Motor neuron (in vitro differentiated cells): ENCODE measurements at regions of chr16 and their contacts with region 1.

Region 1: DNA sequence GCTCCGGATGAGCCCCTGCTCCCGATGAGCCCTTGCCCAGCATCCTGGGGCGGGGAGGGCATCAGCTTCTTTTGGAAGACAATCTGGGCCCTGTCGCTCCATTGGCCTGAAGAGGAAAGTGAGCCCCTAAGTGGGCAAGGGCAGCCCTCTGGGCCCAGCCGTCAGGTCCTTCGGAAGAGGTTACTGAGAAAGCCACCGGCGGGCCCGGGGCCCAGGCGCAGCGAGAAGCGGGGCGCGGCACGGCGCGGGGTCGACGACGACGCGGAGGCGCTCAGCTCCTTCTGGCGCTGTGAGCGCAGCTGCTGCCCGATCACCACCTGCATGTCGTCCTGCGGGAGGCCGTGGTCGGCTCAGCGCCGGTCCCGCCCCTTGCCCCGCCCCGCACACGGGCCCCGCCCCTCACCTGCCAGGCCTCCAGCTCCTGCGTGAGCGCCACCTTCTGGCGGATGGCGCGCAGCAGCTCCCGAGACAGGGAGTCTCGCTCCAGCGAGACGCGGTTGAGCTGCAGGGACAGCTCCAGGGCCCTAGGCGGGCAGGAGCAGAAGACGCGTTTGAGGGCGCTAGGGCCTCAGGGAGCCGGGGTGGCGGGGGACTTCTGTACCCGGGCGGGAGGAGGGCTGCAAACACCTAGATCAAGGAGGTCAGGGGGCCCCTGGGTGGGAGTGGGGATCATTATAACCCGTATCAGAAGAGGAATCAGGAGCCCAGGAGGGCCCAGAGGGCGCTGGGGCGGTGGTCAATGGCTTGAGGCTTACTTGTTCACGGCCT is 4.3 kb downstream of the THOC6 start:
- ATAC-seq: peak; percentile 4 to 56 (median 48)
- H3K4me3 ChIP-seq: peak overlapping the region; percentile 12 to 29 (median 26)
- H3K27ac ChIP-seq: peak overlapping the region in 1 of 2 donors; percentile 58
- H3K4me1 ChIP-seq: peaks cover 4 to 9% of the 10 kb centered on the region in 2 donors

Region 2: DNA sequence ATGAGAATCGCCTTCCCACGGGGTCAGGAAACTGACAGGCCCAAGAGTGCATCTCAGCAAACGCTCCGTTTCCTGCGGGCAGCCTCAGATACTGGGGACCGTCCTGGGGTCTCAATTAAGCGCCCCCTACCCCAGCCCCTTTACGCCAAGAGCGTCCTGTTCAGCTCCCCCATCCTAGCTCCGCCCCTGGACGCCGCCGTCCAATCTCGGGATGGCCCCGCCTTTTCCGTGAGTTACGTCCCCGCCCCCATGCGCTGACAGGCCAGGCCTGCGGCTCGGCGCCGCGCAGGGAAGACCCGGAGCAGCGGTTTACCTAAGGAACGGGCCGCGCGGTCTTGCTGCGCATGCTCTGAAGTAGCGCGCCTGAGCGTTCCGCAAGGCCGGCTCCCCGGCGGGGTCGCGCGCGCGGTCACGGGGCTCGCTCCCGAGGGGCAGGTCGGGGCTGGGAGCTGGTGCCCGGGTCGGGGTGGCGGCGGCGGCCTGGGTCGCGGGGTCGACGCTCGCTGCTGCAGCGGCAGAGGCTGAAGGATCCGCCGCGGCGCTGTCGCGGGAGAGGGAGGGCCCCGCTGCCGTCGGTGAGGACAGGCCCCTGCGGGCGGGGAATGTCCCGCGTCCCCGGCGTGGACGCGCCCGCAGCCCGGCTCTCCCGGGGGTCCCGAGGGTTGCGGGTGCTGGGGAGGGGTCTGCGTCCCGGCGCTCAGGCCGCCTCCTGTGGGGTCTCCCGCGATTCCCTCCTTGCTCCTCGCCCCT is 116.4 kb before region 1 on chr16 and contains the start of gene FLYWCH1:
- in situ Hi-C with region 1: no loop called
- ATAC-seq: peak; percentile 65 to 94 (median 90)
- H3K4me3 ChIP-seq: peak within 1 kb of the TSS; percentile 47 to 98 (median 73)
- H3K27ac ChIP-seq: peak within 1 kb of the TSS; percentile 50 to 51
- H3K4me1 ChIP-seq: peaks cover 5 to 7% of the 10 kb centered on the region in 2 donors
- total RNA-seq, gene FLYWCH1: 15.0 to 55.9 (median 23.0) TPM

Region 3: GRCh38 chr16:3134564-3135417 is 106.7 kb after region 1 on chr16 and contains the start of gene ZNF213:
- in situ Hi-C with region 1: loop called in 1 of 9 experiments (anchors 25 kb)
- ATAC-seq: peak; percentile 90 to 96 (median 94)
- H3K4me3 ChIP-seq: peak within 1 kb of the TSS; percentile 85 to 99 (median 93)
- H3K27ac ChIP-seq: peak within 1 kb of the TSS; percentile 98 to 99
- H3K4me1 ChIP-seq: peaks cover 12 to 15% of the 10 kb centered on the region in 2 donors
- total RNA-seq, gene ZNF213: 2.6 to 9.6 (median 6.5) TPM